GM10248 (cell line): ENCODE measurements at regions of chr12 and their contacts with region 1.

Region 1: DNA sequence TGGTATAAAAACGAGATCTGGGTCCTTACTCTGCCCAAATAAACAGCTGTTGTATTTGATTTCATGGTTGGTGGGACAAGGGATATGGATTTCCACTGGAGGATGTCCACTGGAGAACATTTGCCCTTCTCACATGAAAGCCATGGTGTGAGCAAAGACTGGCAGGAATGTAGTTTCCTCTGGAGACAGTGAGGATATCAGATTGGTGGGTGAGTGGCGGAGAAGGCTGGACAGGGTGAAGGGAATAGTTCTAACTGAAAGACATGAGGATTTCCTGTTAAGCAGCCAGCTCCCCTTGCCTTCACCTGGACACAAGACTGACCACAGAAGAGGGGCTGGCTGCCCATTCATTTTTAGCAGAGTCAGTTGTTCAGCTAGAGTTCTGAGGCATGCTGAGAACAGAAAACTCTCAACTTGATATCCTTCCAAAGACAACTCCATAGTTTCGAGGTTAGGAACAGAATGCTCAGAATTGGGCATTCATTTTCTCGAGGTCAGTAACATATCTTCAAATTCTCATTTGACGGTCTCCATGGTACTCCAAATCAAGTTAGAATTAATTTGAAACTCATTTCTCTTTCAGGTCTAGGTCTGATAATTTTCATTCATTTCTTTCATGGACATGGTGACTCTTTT is 365.7 kb downstream of the LRIG3 start:
- DNase-seq: no peak
- CTCF ChIP-seq: no peak

Region 2: DNA sequence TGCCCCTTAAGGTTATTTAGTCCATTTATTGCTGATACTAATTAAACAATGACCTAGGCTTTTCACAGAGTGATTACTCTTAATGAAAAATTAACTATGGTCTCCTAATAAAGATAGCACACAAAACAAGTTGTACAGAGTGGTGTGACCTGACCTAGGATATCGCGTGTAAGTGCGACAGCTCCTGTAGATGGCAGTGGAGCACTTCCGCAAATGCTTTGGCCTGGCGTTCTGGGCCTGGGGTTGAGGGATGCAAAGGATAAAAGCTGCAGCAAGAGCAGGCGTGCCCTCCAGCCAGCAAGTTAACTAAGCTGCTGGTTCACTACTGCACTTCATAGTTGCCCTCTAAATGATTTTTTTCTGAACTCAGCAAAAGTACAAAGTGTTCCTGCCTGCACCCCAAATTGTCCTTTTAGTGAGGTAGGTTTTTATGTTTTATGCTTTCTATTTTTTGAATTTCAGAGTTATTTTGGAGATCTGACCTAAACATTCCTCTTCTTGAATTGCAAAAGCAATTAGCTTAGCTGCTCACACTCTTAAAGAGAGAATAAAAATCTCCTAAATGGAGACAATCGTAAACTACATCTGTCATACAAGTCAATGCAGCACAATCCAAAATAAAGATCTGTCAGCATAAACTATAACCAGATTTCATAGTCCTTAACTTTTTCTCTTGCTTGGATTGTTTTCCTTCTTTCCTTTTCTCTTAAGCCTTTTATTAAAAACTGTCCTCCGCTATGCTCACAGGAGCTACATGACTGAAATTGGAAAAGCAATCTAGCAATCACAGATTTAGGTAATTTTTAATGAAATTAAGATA is 13.9 kb before region 1 on chr12:
- CTCF ChIA-PET with region 1: interaction called, 30 read pairs
- POLR2A ChIA-PET with region 1: no interaction called
- DNase-seq: no peak
- CTCF ChIP-seq: peak; percentile 54

Region 3: DNA sequence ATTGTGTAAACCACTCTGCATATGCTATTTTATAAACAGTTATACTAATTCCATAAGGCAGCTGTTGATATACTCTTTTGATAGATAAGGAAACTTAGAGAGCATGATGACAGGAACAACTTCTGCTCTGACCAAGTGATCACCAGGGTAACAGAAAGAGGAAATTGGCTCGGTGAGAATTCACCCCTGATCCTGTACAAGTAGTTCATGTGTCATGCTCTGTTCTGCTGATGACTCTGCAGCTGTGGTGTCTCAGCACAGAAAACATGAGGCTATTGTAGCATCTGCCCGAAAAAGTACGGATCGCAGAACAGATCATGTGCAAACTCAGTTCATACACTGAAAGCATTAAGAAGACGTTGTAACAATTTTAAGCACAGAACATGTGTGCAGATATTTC is 20.6 kb after region 1 on chr12:
- CTCF ChIA-PET with region 1: no interaction called
- POLR2A ChIA-PET with region 1: no interaction called
- DNase-seq: no peak
- CTCF ChIP-seq: no peak